ENCODE measurements at regions of chr19 and their contacts with region 1.

Region 1: GRCh38 chr19:12777217-12778016 is 2.1 kb upstream of the HOOK2 start:
- DNase-seq: peak; percentile 78
- H3K4me3 ChIP-seq: peak overlapping the region; percentile 14 to 57 (median 51)
- H3K27ac ChIP-seq: peak overlapping the region; percentile 82
- H3K4me1 ChIP-seq: peaks cover 23% of the 10 kb centered on the region
- H3K27me3 ChIP-seq: no peaks in the 10 kb centered on the region
- CTCF ChIP-seq: peak; percentile 96 to 97
- POLR2A ChIP-seq: no peak

Region 2: DNA sequence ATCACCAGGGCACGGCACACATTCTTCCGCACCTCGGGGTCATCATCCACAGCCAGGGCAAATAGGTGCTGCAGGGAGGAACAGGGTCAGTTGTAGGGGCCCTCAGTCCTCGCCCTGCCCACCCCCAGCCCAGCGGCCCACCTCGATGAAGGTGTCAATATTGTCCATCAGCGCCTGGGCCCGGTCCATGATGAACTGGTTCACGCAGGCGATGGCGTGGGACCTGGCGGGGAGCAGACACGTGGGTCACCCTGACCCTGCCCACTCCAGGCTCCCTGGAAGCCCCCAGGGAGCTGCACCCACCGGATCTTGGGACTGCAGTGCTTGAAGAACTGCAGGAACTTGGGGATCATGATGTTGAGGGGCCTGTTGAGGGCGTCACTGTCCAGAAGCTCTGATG is 62.3 kb before region 1 on chr19:
- CTCF ChIA-PET with region 1: no interaction called
- POLR2A ChIA-PET with region 1: no interaction called
- dilution Hi-C with region 1: no loop called
- intact Hi-C with region 1: no loop called
- DNase-seq: no peak
- H3K4me3 ChIP-seq: no peak overlapping the region
- H3K27ac ChIP-seq: no peak overlapping the region
- H3K4me1 ChIP-seq: no peaks in the 10 kb centered on the region
- H3K27me3 ChIP-seq: no peaks in the 10 kb centered on the region
- CTCF ChIP-seq: no peak
- POLR2A ChIP-seq: no peak

Region 3: GRCh38 chr19:12749938-12750521 is 27.4 kb before region 1 on chr19:
- CTCF ChIA-PET with region 1: no interaction called
- POLR2A ChIA-PET with region 1: no interaction called
- dilution Hi-C with region 1: no loop called
- intact Hi-C with region 1: no loop called
- DNase-seq: no peak
- H3K4me3 ChIP-seq: no peak overlapping the region
- H3K27ac ChIP-seq: no peak overlapping the region
- H3K4me1 ChIP-seq: peaks cover 2% of the 10 kb centered on the region
- H3K27me3 ChIP-seq: peaks cover 0 to 7% of the 10 kb centered on the region in 2 experiments
- CTCF ChIP-seq: no peak
- POLR2A ChIP-seq: no peak

Region 4: DNA sequence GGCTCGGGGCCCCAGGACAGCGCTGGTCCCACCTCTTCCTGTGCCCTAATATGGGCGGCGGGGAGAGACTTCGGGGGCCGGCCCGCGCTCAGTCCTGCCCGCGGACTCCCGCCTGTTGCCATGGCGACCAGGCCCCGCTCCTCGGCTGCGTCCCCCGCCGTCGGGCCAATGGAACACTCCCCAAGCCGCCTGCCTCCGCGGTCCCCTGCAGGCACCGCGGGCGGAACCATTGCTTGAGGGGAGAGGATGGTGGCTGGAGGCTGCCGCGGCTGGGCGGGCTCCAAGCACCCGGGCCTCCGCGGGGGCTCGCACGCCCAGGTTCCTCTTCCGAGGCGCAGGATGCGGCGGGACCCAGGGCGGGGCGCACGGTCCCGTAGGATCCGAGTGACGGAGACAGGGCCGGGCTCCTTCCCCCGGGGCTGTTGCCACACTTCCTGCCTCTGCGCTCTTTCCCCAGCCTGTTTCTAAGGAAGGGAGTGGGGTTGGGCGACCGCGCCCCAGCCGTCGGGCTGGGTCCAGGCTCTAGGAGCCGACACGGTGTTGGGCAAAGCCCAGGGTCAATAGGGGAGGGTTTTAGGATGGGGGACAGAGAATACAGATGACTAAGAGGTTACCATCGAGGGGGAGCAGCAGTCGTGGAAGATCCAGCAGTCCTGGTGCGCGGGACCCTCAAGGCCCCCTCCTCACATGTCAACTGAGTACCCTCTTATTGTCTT is 12.6 kb after region 1 on chr19:
- CTCF ChIA-PET with region 1: interaction called, 387 read pairs
- POLR2A ChIA-PET with region 1: interaction called, 94 read pairs
- dilution Hi-C with region 1: no loop called
- intact Hi-C with region 1: loop called (anchors 1 kb)
- DNase-seq: peak; percentile 91
- H3K4me3 ChIP-seq: peak overlapping the region; percentile 16 to 44 (median 37)
- H3K27ac ChIP-seq: peak overlapping the region; percentile 65
- H3K4me1 ChIP-seq: peaks cover 35% of the 10 kb centered on the region
- H3K27me3 ChIP-seq: no peaks in the 10 kb centered on the region
- CTCF ChIP-seq: no peak
- POLR2A ChIP-seq: no peak

Region 5: GRCh38 chr19:12838182-12838885 is 60.9 kb after region 1 on chr19 and contains the start of gene MAST1:
- CTCF ChIA-PET with region 1: interaction called, 4 read pairs
- POLR2A ChIA-PET with region 1: no interaction called
- dilution Hi-C with region 1: no loop called
- intact Hi-C with region 1: loop called (anchors 2 kb)
- DNase-seq: no peak
- H3K4me3 ChIP-seq: peak within 1 kb of the TSS in 1 of 3 experiments; percentile 10
- H3K27ac ChIP-seq: no peak within 1 kb of the TSS
- H3K4me1 ChIP-seq: no peaks in the 10 kb centered on the region
- H3K27me3 ChIP-seq: peaks cover 55 to 66% of the 10 kb centered on the region in 2 experiments
- CTCF ChIP-seq: peak; percentile 40 to 60
- POLR2A ChIP-seq: no peak
- total RNA-seq, gene MAST1: 0.13 and 0.69 TPM in 2 replicates

Region 6: GRCh38 chr19:13033819-13034611 is 256.6 kb after region 1 on chr19:
- CTCF ChIA-PET with region 1: no interaction called
- POLR2A ChIA-PET with region 1: no interaction called
- dilution Hi-C with region 1: no loop called
- intact Hi-C with region 1: no loop called
- DNase-seq: no peak
- H3K4me3 ChIP-seq: no peak overlapping the region
- H3K27ac ChIP-seq: no peak overlapping the region
- H3K4me1 ChIP-seq: peaks cover 15% of the 10 kb centered on the region
- H3K27me3 ChIP-seq: no peaks in the 10 kb centered on the region
- CTCF ChIP-seq: peak; percentile 77 to 86
- POLR2A ChIP-seq: no peak